ENCODE measurements at regions of chr3 and their contacts with region 1.

Region 1: DNA sequence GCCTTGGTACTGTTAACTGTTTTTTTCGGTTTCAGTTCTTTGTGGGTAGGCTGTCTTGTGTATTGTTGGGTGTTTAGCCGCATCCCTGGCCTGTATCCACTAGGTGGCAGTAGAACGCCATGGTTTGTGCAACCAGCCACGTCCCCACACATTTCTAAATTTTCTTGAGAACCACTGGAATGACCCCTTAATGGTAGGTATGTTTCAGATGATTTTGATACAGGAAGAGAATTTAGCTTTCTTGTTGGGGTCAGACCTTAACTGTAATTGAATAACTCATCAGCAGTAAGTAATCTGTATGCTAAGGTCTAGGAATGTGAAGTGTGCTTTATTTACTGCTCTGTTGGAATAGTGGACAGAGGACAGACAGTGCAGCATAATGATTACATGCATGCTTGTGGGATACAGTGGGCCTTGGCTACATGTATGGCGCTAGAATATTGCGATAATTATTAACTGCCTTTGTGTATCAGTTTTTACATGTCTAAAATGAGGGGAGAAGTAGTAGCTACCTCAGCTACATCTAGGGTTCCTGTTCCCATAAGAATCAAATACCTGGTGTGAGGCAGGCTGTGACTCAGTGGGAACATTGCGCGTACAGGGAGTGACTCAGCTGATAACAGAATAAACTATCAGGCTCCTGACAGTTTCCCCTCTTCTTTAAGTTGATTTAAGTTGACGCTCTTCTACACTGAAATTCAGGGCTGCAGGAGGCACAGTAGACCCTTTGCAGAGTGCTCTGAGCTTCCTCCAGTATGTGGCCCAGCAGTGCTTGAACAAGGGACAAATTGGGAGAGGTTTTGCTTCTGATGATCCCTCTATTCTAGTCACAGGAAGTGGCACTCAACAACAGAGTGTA is 25.0 kb upstream of the GPR171 start:
- DNase-seq: peak; percentile 90
- ATAC-seq: peak; percentile 85
- H3K4me3 ChIP-seq: no peak overlapping the region
- H3K4me3 Mint-ChIP-seq: no peak overlapping the region
- H3K27ac ChIP-seq: peak overlapping the region; percentile 25 to 58
- H3K27ac Mint-ChIP-seq: peak overlapping the region; percentile 86
- H3K4me1 ChIP-seq: peaks cover 39 to 40% of the 10 kb centered on the region in 2 donors
- H3K4me1 Mint-ChIP-seq: peaks cover 39% of the 10 kb centered on the region
- H3K27me3 ChIP-seq: no peaks in the 10 kb centered on the region
- H3K27me3 Mint-ChIP-seq: no peaks in the 10 kb centered on the region
- CTCF ChIP-seq: peak; percentile 91

Region 2: GRCh38 chr3:151156618-151157216 is 71.3 kb before region 1 on chr3:
- CTCF ChIA-PET with region 1: interaction called, 21 read pairs
- POLR2A ChIA-PET with region 1: no interaction called
- intact Hi-C with region 1: loop called (anchors 1 kb)
- DNase-seq: peak; percentile 71
- ATAC-seq: peak; percentile 78
- H3K4me3 ChIP-seq: no peak overlapping the region
- H3K4me3 Mint-ChIP-seq: no peak overlapping the region
- H3K27ac ChIP-seq: no peak overlapping the region
- H3K27ac Mint-ChIP-seq: no peak overlapping the region
- H3K4me1 ChIP-seq: no peaks in the 10 kb centered on the region
- H3K4me1 Mint-ChIP-seq: no peaks in the 10 kb centered on the region
- H3K27me3 ChIP-seq: no peaks in the 10 kb centered on the region
- H3K27me3 Mint-ChIP-seq: no peaks in the 10 kb centered on the region
- CTCF ChIP-seq: peak; percentile 74

Region 3: DNA sequence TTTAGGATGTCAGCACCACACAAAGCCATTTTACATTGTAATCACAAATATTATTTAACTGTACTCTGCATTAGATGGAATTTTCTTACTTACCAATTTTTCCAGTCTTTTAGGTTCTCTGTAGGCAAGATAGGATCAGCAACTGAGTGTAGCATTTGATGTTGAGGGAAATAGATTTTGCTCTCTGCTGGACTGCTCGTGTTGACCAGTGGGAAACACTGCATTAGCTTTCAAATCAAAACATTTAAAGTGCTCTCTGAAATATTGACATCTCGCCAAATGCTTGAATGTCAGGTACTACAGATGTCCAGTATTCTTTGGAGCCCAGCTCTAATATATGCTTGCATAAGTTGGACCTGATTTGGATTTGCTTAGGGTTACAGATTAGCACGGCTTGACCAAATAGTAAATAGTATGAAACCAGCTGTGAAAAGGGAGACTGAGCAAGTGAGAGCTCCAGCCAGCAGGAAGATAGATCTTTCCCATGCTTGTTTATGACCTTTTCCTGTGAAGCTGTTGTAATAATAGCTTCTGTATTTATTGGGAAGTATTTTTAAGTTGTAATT is 20.8 kb after region 1 on chr3:
- CTCF ChIA-PET with region 1: interaction called, 10 read pairs
- POLR2A ChIA-PET with region 1: no interaction called
- intact Hi-C with region 1: no loop called
- DNase-seq: no peak
- ATAC-seq: no peak
- H3K4me3 ChIP-seq: no peak overlapping the region
- H3K4me3 Mint-ChIP-seq: no peak overlapping the region
- H3K27ac ChIP-seq: no peak overlapping the region
- H3K27ac Mint-ChIP-seq: no peak overlapping the region
- H3K4me1 ChIP-seq: no peaks in the 10 kb centered on the region
- H3K4me1 Mint-ChIP-seq: peaks cover 11% of the 10 kb centered on the region
- H3K27me3 ChIP-seq: no peaks in the 10 kb centered on the region
- H3K27me3 Mint-ChIP-seq: no peaks in the 10 kb centered on the region
- CTCF ChIP-seq: no peak

Region 4: GRCh38 chr3:151265866-151266265 is 37.8 kb after region 1 on chr3:
- CTCF ChIA-PET with region 1: interaction called, 105 read pairs
- POLR2A ChIA-PET with region 1: interaction called, 11 read pairs
- intact Hi-C with region 1: loop called (anchors 1 kb)
- DNase-seq: peak; percentile 95
- ATAC-seq: peak; percentile 89
- H3K4me3 ChIP-seq: peak overlapping the region in 1 of 5 experiments; percentile 34
- H3K4me3 Mint-ChIP-seq: peak overlapping the region; percentile 66
- H3K27ac ChIP-seq: peak overlapping the region; percentile 97 to 99
- H3K27ac Mint-ChIP-seq: peak overlapping the region; percentile 99
- H3K4me1 ChIP-seq: peaks cover 44 to 53% of the 10 kb centered on the region in 2 donors
- H3K4me1 Mint-ChIP-seq: peaks cover 66% of the 10 kb centered on the region
- H3K27me3 ChIP-seq: no peaks in the 10 kb centered on the region
- H3K27me3 Mint-ChIP-seq: no peaks in the 10 kb centered on the region
- CTCF ChIP-seq: no peak

Region 5: DNA sequence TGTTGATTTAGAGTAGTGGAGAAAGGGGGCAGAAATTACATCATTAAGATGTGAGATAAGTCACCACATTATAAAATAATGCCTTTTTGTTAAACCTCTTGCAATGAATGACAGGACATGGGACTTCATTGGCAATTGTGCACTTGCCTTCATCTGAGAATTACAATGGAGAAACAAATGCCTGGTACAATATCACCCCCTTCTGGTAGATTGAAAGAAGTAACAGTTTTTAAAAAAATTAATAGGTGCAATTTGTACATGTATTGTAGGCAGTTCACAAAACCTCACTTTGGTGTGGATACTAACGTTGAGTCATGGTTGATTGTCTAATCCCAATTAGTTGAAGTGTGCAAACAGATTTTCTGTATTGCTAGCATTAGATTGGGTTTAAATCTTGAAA is 54.9 kb after region 1 on chr3:
- CTCF ChIA-PET with region 1: interaction called, 460 read pairs
- POLR2A ChIA-PET with region 1: interaction called, 52 read pairs
- intact Hi-C with region 1: loop called (anchors 1 kb)
- DNase-seq: peak; percentile 78
- ATAC-seq: peak; percentile 17
- H3K4me3 ChIP-seq: no peak overlapping the region
- H3K4me3 Mint-ChIP-seq: no peak overlapping the region
- H3K27ac ChIP-seq: no peak overlapping the region
- H3K27ac Mint-ChIP-seq: no peak overlapping the region
- H3K4me1 ChIP-seq: peaks cover 30 to 31% of the 10 kb centered on the region in 2 donors
- H3K4me1 Mint-ChIP-seq: peaks cover 28% of the 10 kb centered on the region
- H3K27me3 ChIP-seq: no peaks in the 10 kb centered on the region
- H3K27me3 Mint-ChIP-seq: no peaks in the 10 kb centered on the region
- CTCF ChIP-seq: peak; percentile 84

Region 6: DNA sequence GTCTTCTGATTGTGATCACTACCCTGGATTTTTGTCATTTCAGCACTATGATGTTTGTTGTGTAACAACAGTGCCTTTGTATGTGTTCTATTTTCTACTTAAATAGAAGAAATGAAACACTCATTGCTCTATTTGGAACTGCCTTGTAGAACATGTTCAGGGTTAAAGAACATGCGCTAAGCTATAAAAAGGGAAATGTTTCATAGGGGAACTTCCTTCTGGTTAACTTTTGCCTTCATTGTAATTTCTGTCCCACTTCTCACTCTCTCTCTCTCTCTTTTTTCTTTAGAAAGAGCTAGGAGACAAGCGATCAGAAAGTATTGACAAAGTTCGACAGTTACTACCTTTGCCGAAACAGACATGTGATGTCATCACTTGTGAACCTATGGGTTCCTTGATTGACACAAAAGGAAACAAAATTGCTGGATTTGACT is 156.7 kb after region 1 on chr3 and contains the start of gene P2RY12:
- CTCF ChIA-PET with region 1: interaction called, 6 read pairs
- POLR2A ChIA-PET with region 1: interaction called, 4 read pairs
- intact Hi-C with region 1: loop called (anchors 10 kb)
- DNase-seq: peak; percentile 62
- ATAC-seq: peak; percentile 24
- H3K4me3 ChIP-seq: peak within 1 kb of the TSS in 4 of 5 experiments; percentile 18 to 53 (median 35)
- H3K4me3 Mint-ChIP-seq: peak within 1 kb of the TSS; percentile 81
- H3K27ac ChIP-seq: peak within 1 kb of the TSS; percentile 59 to 87
- H3K27ac Mint-ChIP-seq: peak within 1 kb of the TSS; percentile 85
- H3K4me1 ChIP-seq: peaks cover 55 to 63% of the 10 kb centered on the region in 2 donors
- H3K4me1 Mint-ChIP-seq: peaks cover 64% of the 10 kb centered on the region
- H3K27me3 ChIP-seq: no peaks in the 10 kb centered on the region
- H3K27me3 Mint-ChIP-seq: no peaks in the 10 kb centered on the region
- CTCF ChIP-seq: no peak
- total RNA-seq, gene P2RY12: 0.73 and 0.79 TPM in 2 replicates

Region 7: DNA sequence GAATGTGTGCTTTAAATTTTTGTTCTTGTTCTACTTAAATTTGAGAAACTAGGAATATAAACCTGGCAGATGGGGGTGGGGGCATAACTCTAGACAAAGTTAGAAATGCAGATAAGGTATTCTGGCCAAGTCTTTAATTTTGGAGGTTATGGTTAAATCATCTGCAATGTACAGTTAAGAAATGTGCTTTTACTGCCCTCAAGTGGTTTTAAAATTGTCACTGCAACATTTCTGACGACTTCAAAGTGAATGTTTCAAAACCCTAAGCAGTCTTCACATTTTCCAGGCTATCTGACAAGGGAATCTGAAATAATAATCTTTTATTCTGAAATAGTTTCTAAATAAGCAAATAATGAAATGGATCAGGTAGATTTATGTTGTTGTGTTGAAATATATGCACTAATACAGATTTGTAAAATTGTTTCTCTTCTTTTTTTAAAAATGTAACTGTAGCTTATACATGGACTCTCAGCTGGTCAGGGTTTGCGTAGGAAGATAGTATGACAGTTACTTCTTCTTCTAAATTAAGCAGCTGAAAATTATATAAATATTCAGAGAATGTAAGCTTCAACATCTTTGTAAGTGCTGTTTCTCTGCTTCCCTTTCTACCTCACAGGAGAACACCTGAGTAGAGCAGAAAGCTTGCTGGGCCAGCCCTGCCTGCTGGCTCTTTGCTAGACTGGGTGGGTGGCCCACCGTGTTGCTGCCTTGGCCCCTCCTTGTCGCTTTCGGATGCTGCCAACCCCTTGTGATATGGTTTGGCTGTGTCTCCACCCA is 690.4 kb after region 1 on chr3:
- CTCF ChIA-PET with region 1: no interaction called
- POLR2A ChIA-PET with region 1: no interaction called
- intact Hi-C with region 1: loop called (anchors 2 kb)
- DNase-seq: peak; percentile 40
- ATAC-seq: no peak
- H3K4me3 ChIP-seq: no peak overlapping the region
- H3K4me3 Mint-ChIP-seq: no peak overlapping the region
- H3K27ac ChIP-seq: no peak overlapping the region
- H3K27ac Mint-ChIP-seq: no peak overlapping the region
- H3K4me1 ChIP-seq: no peaks in the 10 kb centered on the region
- H3K4me1 Mint-ChIP-seq: no peaks in the 10 kb centered on the region
- H3K27me3 ChIP-seq: no peaks in the 10 kb centered on the region
- H3K27me3 Mint-ChIP-seq: no peaks in the 10 kb centered on the region
- CTCF ChIP-seq: peak; percentile 65